ENCODE measurements at regions of chr4 and their contacts with region 1.

Region 1: GRCh38 chr4:152779513-152780266 is at the starts of genes ARFIP1 and TIGD4:
- DNase-seq: peak; percentile 97
- ATAC-seq: peak; percentile 96 to 97
- H3K4me3 ChIP-seq: peak within 1 kb of the TSS; percentile 80 to 90 (median 90)
- H3K27ac ChIP-seq: peak within 1 kb of the TSS; percentile 84 to 95 (median 90)
- H3K4me1 ChIP-seq: peaks cover 28 to 38% of the 10 kb centered on the region in 2 donors
- H3K27me3 ChIP-seq: no peaks in the 10 kb centered on the region
- CTCF ChIP-seq: peak in 1 of 5 experiments; percentile 27
- POLR2A ChIP-seq: peak; percentile 46 to 49
- total RNA-seq, gene ARFIP1: 8.4 to 11.9 (median 9.7) TPM
- total RNA-seq, gene TIGD4: 0.09 to 0.23 TPM in 2 of 4 donors, not detected in the others

Region 2: GRCh38 chr4:151015459-151016347 is 1764.0 kb before region 1 on chr4:
- in situ Hi-C with region 1: no loop called
- intact Hi-C with region 1: loop called (anchors 10 kb)
- DNase-seq: peak; percentile 27 to 62
- ATAC-seq: peak; percentile 85 to 86
- H3K4me3 ChIP-seq: peak overlapping the region; percentile 81 to 97 (median 93)
- H3K27ac ChIP-seq: peak overlapping the region; percentile 83 to 89 (median 86)
- H3K4me1 ChIP-seq: peaks cover 18% of the 10 kb centered on the region in 2 donors
- H3K27me3 ChIP-seq: no peaks in the 10 kb centered on the region
- CTCF ChIP-seq: no peak
- POLR2A ChIP-seq: peak; percentile 58 to 59

Region 3: GRCh38 chr4:151760712-151761527 is 1018.8 kb before region 1 on chr4 and contains the start of gene GATB:
- in situ Hi-C with region 1: no loop called
- intact Hi-C with region 1: loop called (anchors 5 kb)
- DNase-seq: peak; percentile 91 to 92
- ATAC-seq: peak; percentile 100
- H3K4me3 ChIP-seq: peak within 1 kb of the TSS; percentile 83 to 95 (median 92)
- H3K27ac ChIP-seq: peak within 1 kb of the TSS; percentile 72 to 88 (median 81)
- H3K4me1 ChIP-seq: peaks cover 7 to 11% of the 10 kb centered on the region in 2 donors
- H3K27me3 ChIP-seq: no peaks in the 10 kb centered on the region
- CTCF ChIP-seq: peak in 3 of 5 experiments; percentile 38 to 63 (median 52)
- POLR2A ChIP-seq: peak; percentile 48 to 55
- total RNA-seq, gene GATB: 18.7 to 34.0 (median 27.6) TPM

Region 4: DNA sequence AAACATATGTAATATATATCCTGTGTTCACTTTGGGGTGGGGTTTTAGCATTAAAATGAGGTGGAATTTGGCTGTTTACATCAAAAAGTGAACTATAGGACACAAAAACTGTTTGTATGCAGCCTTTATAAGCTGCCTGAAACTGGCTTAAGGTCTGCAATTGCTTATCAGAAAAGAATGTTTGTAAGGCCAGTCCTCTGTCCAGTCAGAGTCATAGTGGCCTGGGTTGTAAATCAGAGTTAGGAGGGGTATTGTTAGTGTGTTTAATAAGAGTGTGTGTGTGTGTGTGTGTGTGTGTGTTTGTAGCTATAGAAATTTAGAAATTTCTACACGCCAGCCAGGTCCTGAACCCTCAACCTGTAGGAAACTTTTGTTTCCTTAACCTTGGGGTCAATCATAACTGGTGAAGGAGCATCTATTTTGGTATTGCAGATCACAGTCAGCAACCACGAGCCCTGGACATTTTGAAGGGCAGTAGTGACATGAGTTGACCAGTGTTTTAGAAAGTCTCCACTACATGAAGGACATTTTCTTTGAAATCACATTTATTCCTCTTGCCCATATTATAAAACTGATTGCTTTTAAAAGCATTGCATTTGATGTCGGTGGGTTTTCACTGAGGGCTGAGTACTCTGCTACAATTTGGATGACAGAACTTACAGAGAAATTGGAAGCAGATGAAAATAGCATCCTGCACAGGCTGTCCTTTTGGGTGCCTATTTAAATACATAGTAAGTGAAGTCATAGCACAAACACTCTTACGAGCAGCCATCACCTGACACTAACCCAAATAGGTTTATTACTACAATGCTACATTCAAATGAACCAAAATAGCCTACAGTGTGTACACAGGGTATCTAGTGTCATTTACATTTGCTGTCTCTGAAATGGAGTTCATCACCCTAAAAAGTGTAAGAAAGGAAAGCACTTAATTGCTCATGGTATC is 88.7 kb before region 1 on chr4:
- in situ Hi-C with region 1: no loop called
- intact Hi-C with region 1: loop called (anchors 5 kb)
- DNase-seq: peak; percentile 24 to 48
- ATAC-seq: peak; percentile 93 to 97
- H3K4me3 ChIP-seq: no peak overlapping the region
- H3K27ac ChIP-seq: peak overlapping the region; percentile 64 to 89 (median 86)
- H3K4me1 ChIP-seq: peaks cover 42 to 59% of the 10 kb centered on the region in 2 donors
- H3K27me3 ChIP-seq: no peaks in the 10 kb centered on the region
- CTCF ChIP-seq: no peak
- POLR2A ChIP-seq: peak in 1 of 2 donors; percentile 20

Region 5: DNA sequence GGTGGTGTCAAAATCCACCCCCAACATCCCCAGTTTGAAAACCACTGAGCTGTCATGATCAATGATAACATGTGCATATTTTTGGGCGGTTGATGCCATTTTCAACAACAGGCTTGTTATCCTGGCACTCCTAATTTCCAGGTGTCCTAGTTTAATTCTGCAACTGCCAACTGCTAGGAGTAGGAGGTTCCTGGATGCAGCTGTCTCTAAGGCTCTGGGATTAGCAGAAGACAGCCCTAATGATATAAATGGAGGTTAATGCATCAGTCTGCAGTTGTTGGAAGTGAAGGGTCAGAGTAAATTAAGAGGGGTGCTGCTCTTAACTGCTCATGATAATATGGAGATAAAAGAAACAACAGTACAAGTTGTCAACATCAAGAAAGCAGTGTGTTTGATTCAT is 23.9 kb after region 1 on chr4:
- in situ Hi-C with region 1: no loop called
- intact Hi-C with region 1: no loop called
- DNase-seq: no peak
- ATAC-seq: no peak
- H3K4me3 ChIP-seq: no peak overlapping the region
- H3K27ac ChIP-seq: no peak overlapping the region
- H3K4me1 ChIP-seq: peaks cover 11 to 17% of the 10 kb centered on the region in 2 donors
- H3K27me3 ChIP-seq: no peaks in the 10 kb centered on the region
- CTCF ChIP-seq: no peak
- POLR2A ChIP-seq: no peak

Region 6: DNA sequence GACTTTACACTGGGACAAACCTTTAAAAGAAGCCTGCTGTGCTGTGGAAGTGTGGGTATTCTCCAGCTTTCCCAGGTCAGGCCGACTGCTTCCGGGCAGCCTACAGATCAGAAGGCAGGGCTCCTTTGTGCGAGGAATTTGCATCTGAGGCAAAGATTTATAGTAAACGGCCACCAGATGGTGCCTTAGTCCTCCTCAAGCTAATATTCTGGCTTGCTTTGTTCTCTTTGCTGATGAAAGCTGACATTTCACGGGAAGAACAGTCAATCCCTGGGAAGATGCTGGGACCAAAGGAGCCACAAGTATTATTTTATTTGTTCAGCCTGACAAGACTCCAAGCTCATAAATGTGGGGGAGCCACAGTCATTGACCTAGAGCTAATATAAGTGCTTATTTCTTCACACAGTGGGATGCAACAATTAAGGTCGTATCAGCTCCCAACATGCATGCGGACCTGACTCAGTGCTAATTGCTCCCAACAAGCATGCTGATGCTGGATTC is 303.8 kb after region 1 on chr4:
- in situ Hi-C with region 1: no loop called
- intact Hi-C with region 1: loop called (anchors 5 kb)
- DNase-seq: no peak
- ATAC-seq: peak; percentile 67 to 68
- H3K4me3 ChIP-seq: no peak overlapping the region
- H3K27ac ChIP-seq: no peak overlapping the region
- H3K4me1 ChIP-seq: peaks cover 2 to 4% of the 10 kb centered on the region in 2 donors
- H3K27me3 ChIP-seq: no peaks in the 10 kb centered on the region
- CTCF ChIP-seq: peak in 4 of 5 experiments; percentile 30 to 55 (median 48)
- POLR2A ChIP-seq: no peak

Measured in gastrocnemius medialis (tissue), 4 donors.